ENCODE measurements at regions of chr2 and their contacts with region 1.

Region 1: GRCh38 chr2:98412751-98413458 is 31.8 kb upstream of the INPP4A start:
- DNase-seq: peak; percentile 54
- ATAC-seq: peak; percentile 98
- H3K4me3 ChIP-seq: no peak overlapping the region
- H3K27ac ChIP-seq: no peak overlapping the region
- H3K4me1 ChIP-seq: no peaks in the 10 kb centered on the region; the same call in 1 of the 2 replicates
- H3K27me3 ChIP-seq: no peaks in the 10 kb centered on the region; a peak in 1 of 4 replicates
- CTCF ChIP-seq: peak; percentile 65 to 81 (median 80)
- EP300 ChIP-seq: no peak
- POLR2A ChIP-seq: no peak
- RAD21 ChIP-seq: peak; percentile 94

Region 2: DNA sequence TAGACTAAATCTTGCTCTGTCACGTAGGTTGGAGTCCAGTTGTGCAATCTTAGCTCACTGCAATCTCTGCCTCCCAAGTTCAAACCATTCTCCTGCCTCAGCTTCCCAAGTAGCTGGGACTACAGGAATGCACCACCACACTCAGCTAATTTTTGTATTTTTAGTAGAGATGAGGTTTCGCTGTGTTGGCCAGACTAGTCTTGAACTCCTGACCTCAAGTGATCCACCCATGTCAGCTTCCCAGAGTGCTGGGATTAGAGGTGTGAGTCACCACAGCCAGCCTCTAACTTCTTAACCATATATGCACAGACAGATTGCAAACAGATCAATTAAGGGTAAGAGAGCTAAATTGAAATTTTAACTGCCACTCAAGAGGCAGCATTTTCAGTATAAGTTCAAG is 88.7 kb before region 1 on chr2:
- CTCF ChIA-PET with region 1: no interaction called
- POLR2A ChIA-PET with region 1: no interaction called
- RAD21 ChIA-PET with region 1: no interaction called
- SMC1A ChIA-PET with region 1: no interaction called
- in situ Hi-C with region 1: no loop called
- intact Hi-C with region 1: no loop called
- DNase-seq: no peak
- ATAC-seq: no peak
- H3K4me3 ChIP-seq: no peak overlapping the region
- H3K27ac ChIP-seq: no peak overlapping the region
- H3K4me1 ChIP-seq: no peaks in the 10 kb centered on the region
- H3K27me3 ChIP-seq: no peaks in the 10 kb centered on the region
- CTCF ChIP-seq: no peak
- EP300 ChIP-seq: no peak
- POLR2A ChIP-seq: no peak
- RAD21 ChIP-seq: no peak

Region 3: DNA sequence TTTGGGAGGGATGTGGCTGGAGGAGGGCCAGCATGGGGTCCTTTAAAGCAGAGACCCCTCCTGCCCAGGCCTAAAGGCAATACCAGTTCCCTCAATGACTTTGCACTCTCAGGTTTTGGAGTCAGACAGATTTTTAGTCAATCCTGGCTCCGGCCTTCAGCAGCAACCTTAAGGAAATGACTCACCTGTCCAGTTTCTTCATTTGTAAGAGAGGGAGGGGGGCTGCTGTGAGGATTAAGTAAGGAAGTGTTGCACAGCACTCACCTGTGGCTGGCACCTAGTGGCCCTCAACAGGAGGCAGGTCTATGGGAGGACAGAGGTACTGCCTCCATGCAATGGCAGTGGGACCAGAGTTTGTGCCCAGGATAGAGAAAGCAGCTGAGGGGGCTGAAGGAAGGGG is 52.9 kb before region 1 on chr2:
- CTCF ChIA-PET with region 1: no interaction called
- POLR2A ChIA-PET with region 1: no interaction called
- RAD21 ChIA-PET with region 1: no interaction called
- SMC1A ChIA-PET with region 1: no interaction called
- in situ Hi-C with region 1: no loop called
- intact Hi-C with region 1: no loop called
- DNase-seq: no peak
- ATAC-seq: no peak
- H3K4me3 ChIP-seq: no peak overlapping the region
- H3K27ac ChIP-seq: no peak overlapping the region
- H3K4me1 ChIP-seq: no peaks in the 10 kb centered on the region
- H3K27me3 ChIP-seq: 0 out of 4 replicates have a peak, but pooled peaks cover 0 to 4% of the 10 kb centered on the region in 2 experiments
- CTCF ChIP-seq: no peak
- EP300 ChIP-seq: no peak
- POLR2A ChIP-seq: no peak
- RAD21 ChIP-seq: no peak

Region 4: DNA sequence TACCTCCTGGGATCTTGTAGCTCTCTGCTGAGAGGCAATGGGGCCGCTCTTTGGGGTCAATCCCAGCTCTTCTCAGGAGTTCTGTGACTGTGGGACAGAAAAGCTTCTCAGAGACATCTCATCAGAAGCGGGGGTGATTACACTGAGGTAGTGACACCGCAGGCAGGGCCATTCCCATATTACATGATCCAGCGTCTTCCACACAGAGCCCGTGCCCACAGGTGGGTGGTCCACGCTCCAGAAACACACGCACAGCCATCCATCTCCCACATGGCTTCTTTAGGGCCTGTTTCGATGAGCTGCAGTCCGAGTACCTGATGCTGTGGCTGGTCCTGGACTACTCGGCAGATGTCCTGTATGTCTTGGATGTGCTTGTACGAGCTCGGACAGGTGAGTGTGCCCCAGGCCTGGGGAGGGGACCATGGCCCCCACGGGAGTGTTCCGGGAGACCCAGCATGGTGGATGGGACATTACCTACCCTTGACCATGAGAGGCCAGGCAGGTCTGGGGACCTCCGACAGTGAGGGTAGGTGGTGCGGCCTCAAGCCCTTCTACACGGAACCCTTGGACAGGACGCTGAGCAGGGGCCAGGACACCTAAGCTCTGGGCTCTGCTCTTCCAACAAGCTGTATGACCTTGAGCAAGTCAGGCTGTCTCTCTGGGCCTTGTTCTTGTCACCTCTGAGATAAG is 21.2 kb before region 1 on chr2:
- CTCF ChIA-PET with region 1: no interaction called
- POLR2A ChIA-PET with region 1: no interaction called
- RAD21 ChIA-PET with region 1: no interaction called
- SMC1A ChIA-PET with region 1: no interaction called
- in situ Hi-C with region 1: no loop called
- intact Hi-C with region 1: no loop called
- DNase-seq: no peak
- ATAC-seq: no peak
- H3K4me3 ChIP-seq: no peak overlapping the region
- H3K27ac ChIP-seq: no peak overlapping the region
- H3K4me1 ChIP-seq: no peaks in the 10 kb centered on the region
- H3K27me3 ChIP-seq: no peaks in the 10 kb centered on the region
- CTCF ChIP-seq: no peak
- EP300 ChIP-seq: no peak
- POLR2A ChIP-seq: no peak
- RAD21 ChIP-seq: no peak

Region 5: DNA sequence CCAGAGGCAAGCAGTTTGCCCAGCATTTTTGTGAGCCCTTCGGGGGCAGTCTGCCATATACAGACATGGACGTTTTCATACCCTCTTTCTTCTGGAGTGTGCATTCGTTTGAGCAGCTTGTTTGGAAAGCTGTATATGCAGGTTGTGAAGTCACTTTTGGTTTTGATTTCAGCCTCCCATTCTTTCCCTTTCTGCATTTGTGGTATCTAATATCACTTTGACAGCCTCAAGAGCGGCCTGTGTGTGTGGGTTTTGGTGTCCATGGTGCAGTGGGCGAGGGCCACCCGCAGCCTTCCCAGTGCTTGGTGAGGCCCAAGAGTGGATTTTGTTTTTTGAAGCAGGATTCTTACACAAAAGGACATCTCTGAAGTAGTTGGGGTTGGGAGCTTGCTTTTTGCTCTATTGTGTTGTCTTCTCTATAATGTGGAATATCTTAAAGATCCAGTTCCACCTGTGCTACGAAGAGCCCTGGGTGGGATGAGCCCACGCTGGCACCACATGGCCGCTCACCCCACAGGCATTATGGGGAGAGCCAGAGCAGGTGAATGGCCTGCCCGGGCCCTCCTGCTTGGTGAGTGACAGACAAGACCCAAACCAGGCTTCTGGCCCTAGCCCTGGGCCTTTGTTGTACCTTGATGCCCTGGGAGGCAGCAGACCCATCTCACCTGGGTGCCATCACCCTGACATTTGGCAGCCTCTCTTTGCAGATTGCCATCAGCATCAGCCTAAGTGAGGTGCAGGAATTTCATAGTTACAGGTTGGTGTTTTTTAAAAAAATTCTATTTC is 61.3 kb after region 1 on chr2:
- CTCF ChIA-PET with region 1: interaction called, 8 read pairs
- POLR2A ChIA-PET with region 1: no interaction called
- RAD21 ChIA-PET with region 1: interaction called, 5 read pairs
- SMC1A ChIA-PET with region 1: interaction called, 11 read pairs
- in situ Hi-C with region 1: no loop called
- intact Hi-C with region 1: no loop called
- DNase-seq: no peak
- ATAC-seq: peak; percentile 31
- H3K4me3 ChIP-seq: peak overlapping the region; percentile 34; the same call in 1 of the 2 replicates
- H3K27ac ChIP-seq: peak overlapping the region; percentile 88
- H3K4me1 ChIP-seq: peaks cover 96% of the 10 kb centered on the region
- H3K27me3 ChIP-seq: no peaks in the 10 kb centered on the region; a peak in 1 of 4 replicates
- CTCF ChIP-seq: no peak
- EP300 ChIP-seq: no peak
- POLR2A ChIP-seq: no peak
- RAD21 ChIP-seq: no peak

Region 6: DNA sequence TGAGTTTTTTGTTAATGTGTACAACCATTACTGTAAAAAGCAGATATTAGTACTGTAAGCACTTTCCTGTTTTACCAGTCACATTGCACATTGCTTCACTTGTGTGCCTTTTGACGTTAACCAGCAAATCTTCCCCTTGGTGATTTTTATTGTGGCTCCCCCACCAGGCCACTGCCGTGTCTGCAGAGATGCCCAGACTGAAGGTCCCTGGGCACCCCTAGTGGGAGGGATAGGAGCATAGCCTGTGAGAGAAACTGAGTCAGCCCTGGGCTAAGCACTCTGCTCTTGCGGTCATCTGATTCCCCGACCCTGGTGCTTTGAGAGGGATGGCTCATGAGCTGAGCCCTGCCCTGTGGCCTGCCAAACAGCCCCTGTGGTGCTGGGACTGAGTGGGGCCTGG is 105.2 kb after region 1 on chr2:
- CTCF ChIA-PET with region 1: interaction called, 41 read pairs
- POLR2A ChIA-PET with region 1: no interaction called
- RAD21 ChIA-PET with region 1: interaction called, 12 read pairs
- SMC1A ChIA-PET with region 1: interaction called, 5 read pairs
- in situ Hi-C with region 1: no loop called
- intact Hi-C with region 1: loop called (anchors 1 kb)
- DNase-seq: no peak
- ATAC-seq: peak; percentile 84
- H3K4me3 ChIP-seq: no peak overlapping the region
- H3K27ac ChIP-seq: no peak overlapping the region; the same call in 1 of the 2 replicates
- H3K4me1 ChIP-seq: peaks cover 20% of the 10 kb centered on the region
- H3K27me3 ChIP-seq: no peaks in the 10 kb centered on the region
- CTCF ChIP-seq: peak; percentile 69 to 88 (median 71)
- EP300 ChIP-seq: no peak
- POLR2A ChIP-seq: no peak
- RAD21 ChIP-seq: peak; percentile 81

Region 7: DNA sequence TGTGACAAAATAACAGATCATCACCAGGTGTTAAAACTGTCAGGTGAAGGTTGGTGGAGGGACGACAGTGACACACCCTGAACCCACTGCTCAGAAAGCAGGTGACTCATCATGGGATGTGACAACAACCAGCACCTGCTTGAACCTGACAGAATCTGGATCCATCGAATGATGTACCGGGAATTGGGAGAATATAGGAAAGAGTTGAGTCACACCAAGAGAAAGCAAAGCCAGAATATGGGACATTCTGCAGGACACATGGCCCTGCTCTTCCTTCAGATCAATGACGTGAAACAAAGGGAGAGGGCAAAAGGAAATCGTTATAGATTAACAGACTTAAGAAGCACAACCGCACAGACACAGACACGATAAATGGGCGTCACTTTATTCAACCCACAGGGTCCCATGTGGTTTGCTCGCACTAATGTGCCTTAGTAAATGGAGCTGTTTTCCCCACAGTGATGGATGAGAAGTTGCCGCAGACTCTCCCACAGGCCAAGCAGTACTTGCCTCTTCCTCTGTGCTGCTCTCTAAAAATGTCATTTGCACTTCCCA is 423.0 kb after region 1 on chr2:
- CTCF ChIA-PET with region 1: interaction called, 5 read pairs
- POLR2A ChIA-PET with region 1: no interaction called
- RAD21 ChIA-PET with region 1: interaction called, 3 read pairs
- SMC1A ChIA-PET with region 1: interaction called, 3 read pairs
- in situ Hi-C with region 1: loop called (anchors 10 kb)
- intact Hi-C with region 1: loop called (anchors 5 kb)
- DNase-seq: peak; percentile 4
- ATAC-seq: peak; percentile 85
- H3K4me3 ChIP-seq: no peak overlapping the region
- H3K27ac ChIP-seq: no peak overlapping the region
- H3K4me1 ChIP-seq: no peaks in the 10 kb centered on the region
- H3K27me3 ChIP-seq: no peaks in the 10 kb centered on the region
- CTCF ChIP-seq: no peak
- EP300 ChIP-seq: peak in 1 of 2 experiments; percentile 68; a peak in 1 of 4 replicates
- POLR2A ChIP-seq: no peak
- RAD21 ChIP-seq: no peak

Region 8: DNA sequence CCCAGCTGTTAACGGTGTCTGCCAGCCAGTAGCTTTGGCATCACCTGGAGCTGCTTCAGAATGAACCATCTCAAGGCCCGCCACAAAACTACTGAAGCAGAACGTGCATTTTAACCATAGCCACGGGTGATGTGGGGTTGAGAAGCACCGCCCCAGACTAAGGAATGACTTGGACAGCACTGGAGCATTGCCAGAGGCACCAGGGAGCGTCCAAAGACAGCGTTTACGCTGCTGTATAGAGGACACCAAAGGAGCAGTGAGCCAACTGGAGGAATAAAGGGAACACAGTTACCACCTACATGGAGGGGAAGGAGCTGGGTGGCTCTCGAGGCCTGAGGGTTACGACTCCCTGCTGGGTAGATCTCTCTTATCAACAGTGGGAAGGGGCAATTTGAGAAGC is 1937.8 kb after region 1 on chr2:
- CTCF ChIA-PET with region 1: no interaction called
- POLR2A ChIA-PET with region 1: no interaction called
- RAD21 ChIA-PET with region 1: no interaction called
- SMC1A ChIA-PET with region 1: no interaction called
- in situ Hi-C with region 1: no loop called
- intact Hi-C with region 1: no loop called
- DNase-seq: no peak
- ATAC-seq: no peak
- H3K4me3 ChIP-seq: no peak overlapping the region
- H3K27ac ChIP-seq: no peak overlapping the region
- H3K4me1 ChIP-seq: no peaks in the 10 kb centered on the region
- H3K27me3 ChIP-seq: no peaks in the 10 kb centered on the region
- CTCF ChIP-seq: no peak
- EP300 ChIP-seq: no peak
- POLR2A ChIP-seq: no peak
- RAD21 ChIP-seq: no peak